ENCODE measurements at regions of chr6 and their contacts with region 1.

Region 1: DNA sequence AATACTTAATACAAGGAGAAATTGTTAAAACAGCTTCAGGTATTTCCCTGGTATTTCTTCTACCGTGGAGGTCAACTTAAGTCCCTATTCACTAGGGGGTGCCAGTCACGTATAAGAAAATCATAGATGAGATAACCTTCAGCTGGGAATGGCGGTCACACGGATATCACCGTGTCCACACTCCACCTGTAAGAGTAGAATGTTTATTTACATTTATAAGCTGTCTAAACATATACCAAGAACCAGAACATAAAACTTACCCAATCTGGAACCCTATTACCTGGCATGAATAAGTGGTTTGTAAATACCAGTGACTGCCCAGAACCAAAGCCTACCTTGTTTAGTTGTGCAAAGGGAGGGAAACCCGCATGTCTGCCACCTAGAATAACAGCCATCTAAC is 1.9 kb upstream of the ELOVL4 start:
- DNase-seq: peak; percentile 83 to 87 (median 86)
- H3K4me3 ChIP-seq: no peak overlapping the region
- H3K27ac ChIP-seq: no peak overlapping the region
- H3K4me1 ChIP-seq: peaks cover 0 to 18% (median 14%) of the 10 kb centered on the region in 4 experiments
- H3K27me3 ChIP-seq: peaks cover 20 to 50% (median 25%) of the 10 kb centered on the region in 5 experiments

Region 2: GRCh38 chr6:79833264-79833963 is 115.8 kb before region 1 on chr6:
- CTCF ChIA-PET with region 1: no interaction called
- POLR2A ChIA-PET with region 1: no interaction called
- DNase-seq: no peak
- H3K4me3 ChIP-seq: no peak overlapping the region
- H3K27ac ChIP-seq: no peak overlapping the region
- H3K4me1 ChIP-seq: no peaks in the 10 kb centered on the region
- H3K27me3 ChIP-seq: peaks cover 0 to 7% (median 0%) of the 10 kb centered on the region in 5 experiments

Region 3: DNA sequence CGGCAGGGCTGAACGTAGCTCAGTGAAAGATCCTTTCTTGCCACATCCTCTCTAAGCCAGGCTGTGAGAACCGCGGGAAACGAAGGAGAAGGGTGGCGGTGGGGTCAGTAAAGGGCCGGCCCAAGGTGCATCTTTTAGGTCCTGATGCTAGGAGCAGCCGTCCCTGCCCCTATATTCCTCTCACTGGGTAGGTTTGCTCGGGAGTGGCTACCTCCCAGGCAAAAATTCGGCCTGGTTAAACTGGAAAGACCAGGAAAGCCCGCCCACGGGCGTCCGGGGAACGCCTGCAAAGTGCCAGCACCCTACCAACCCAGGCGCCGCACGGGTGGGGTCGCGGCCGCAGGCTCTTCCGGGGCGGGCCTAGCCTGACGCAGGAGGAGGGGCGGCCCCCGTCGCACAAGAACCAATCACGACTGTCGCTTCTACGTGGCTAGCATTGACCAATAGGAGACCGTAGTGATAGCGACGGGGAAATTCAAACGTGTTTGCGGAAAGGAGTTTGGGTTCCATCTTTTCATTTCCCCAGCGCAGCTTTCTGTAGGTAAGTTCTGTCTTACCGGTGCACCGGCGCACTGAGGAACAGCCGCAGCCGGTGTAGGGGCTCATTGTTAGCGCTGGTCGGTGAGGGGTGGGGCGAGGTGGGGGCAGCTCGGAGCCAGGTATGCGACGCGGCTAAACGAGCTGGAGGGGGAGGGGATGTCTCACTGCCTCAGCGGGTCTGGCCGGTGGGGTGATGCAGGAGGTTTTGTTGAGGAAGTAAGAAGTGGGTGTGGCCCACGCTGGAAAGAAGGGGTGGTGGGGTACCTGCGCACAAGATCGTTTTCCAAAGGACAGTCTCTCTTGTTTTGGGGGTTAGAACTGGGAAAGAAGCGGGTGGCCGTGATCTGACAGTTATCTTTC is 55.2 kb after region 1 on chr6 and contains the start of gene TTK:
- CTCF ChIA-PET with region 1: interaction called, 10 read pairs
- POLR2A ChIA-PET with region 1: no interaction called
- DNase-seq: peak; percentile 93 to 98 (median 98)
- H3K4me3 ChIP-seq: peak within 1 kb of the TSS; percentile 66 to 96 (median 90)
- H3K27ac ChIP-seq: peak within 1 kb of the TSS; percentile 64 to 93
- H3K4me1 ChIP-seq: peaks cover 13 to 18% (median 16%) of the 10 kb centered on the region in 4 experiments
- H3K27me3 ChIP-seq: no peaks in the 10 kb centered on the region

Region 4: GRCh38 chr6:80022803-80023202 is 73.6 kb after region 1 on chr6:
- CTCF ChIA-PET with region 1: no interaction called
- POLR2A ChIA-PET with region 1: no interaction called
- DNase-seq: no peak
- H3K4me3 ChIP-seq: no peak overlapping the region
- H3K27ac ChIP-seq: no peak overlapping the region
- H3K4me1 ChIP-seq: no peaks in the 10 kb centered on the region
- H3K27me3 ChIP-seq: no peaks in the 10 kb centered on the region

Region 5: GRCh38 chr6:80094017-80094416 is 144.8 kb after region 1 on chr6:
- CTCF ChIA-PET with region 1: interaction called, 17 read pairs
- POLR2A ChIA-PET with region 1: no interaction called
- DNase-seq: peak; percentile 19 to 51 (median 46)
- H3K4me3 ChIP-seq: no peak overlapping the region
- H3K27ac ChIP-seq: no peak overlapping the region
- H3K4me1 ChIP-seq: peaks cover 0 to 2% (median 0%) of the 10 kb centered on the region in 4 experiments
- H3K27me3 ChIP-seq: peaks cover 0 to 3% (median 0%) of the 10 kb centered on the region in 5 experiments

Measured in common myeloid progenitor, CD34-positive (primary cell).